Heart right ventricle (tissue), 16 donors: ENCODE measurements at regions of chr4 and their contacts with region 1.

Region 1: DNA sequence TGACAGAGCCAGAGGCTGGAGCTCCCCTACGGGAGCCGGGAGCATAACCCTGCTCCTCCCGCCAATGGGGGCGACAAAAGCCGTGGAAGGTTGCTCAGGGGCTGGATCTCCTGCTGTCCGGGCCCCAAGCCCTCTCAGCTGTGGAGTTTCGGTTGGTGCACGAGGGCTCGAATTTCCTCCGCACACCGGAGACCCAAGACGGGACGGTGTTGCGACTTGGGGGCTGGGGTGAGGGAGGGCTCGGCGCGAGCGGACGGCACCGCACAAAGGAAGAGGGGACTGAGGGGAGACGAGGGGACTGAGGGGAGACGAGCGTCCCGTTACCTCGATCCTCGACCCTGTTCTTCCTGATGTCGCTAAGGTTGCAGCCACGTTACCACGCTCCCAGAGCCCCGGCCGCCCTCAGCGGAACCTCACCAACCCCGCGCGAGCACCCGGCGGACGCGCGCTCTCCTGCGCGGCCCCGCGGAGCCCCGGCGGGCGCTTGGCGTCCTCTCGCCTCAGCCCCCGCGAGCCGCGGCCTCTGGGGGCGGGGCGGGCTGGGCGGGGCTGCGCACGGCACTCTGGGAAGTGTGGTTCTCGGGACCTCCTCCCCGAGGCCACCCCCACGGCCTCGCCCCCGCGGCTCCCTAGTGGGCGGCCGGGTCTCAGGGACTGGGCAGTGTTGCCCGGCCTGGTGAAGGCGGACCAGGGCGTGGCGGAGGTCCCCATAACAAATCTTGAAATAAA is at the start of gene KLHL8:
- DNase-seq: peak; percentile 86 to 90
- ATAC-seq: peak; percentile 98 to 100 (median 98)
- H3K4me3 ChIP-seq: peak within 1 kb of the TSS; percentile 77 to 99 (median 92)
- H3K27ac ChIP-seq: peak within 1 kb of the TSS; percentile 32 to 94 (median 94)
- H3K4me1 ChIP-seq: peaks cover 0 to 18% (median 12%) of the 10 kb centered on the region in 9 donors
- H3K27me3 ChIP-seq: no peaks in the 10 kb centered on the region
- CTCF ChIP-seq: peak in 2 of 9 donors; percentile 11 to 38
- total RNA-seq, gene KLHL8: 10.4 to 15.0 (median 11.9) TPM

Region 2: GRCh38 chr4:86934771-86935565 is 285.3 kb before region 1 on chr4 and contains the start of gene AFF1:
- intact Hi-C with region 1: loop called in 1 of 10 experiments (anchors 2 kb)
- DNase-seq: peak; percentile 94 to 96
- ATAC-seq: peak; percentile 93 to 97 (median 94)
- H3K4me3 ChIP-seq: peak within 1 kb of the TSS; percentile 52 to 99 (median 94)
- H3K27ac ChIP-seq: peak within 1 kb of the TSS; percentile 94 to 100 (median 98)
- H3K4me1 ChIP-seq: peaks cover 0 to 52% (median 35%) of the 10 kb centered on the region in 9 donors
- H3K27me3 ChIP-seq: no peaks in the 10 kb centered on the region
- CTCF ChIP-seq: peak; percentile 22 to 75 (median 61)
- total RNA-seq, gene AFF1: 59.5 to 90.2 (median 77.3) TPM

Region 3: GRCh38 chr4:87118826-87119225 is 101.4 kb before region 1 on chr4:
- intact Hi-C with region 1: no loop called
- DNase-seq: no peak
- ATAC-seq: peak in 1 of 8 donors; percentile 8
- H3K4me3 ChIP-seq: peak overlapping the region in 1 of 10 donors; percentile 33
- H3K27ac ChIP-seq: peak overlapping the region in 6 of 10 donors; percentile 73 to 90 (median 84)
- H3K4me1 ChIP-seq: peaks cover 0 to 69% (median 45%) of the 10 kb centered on the region in 9 donors
- H3K27me3 ChIP-seq: no peaks in the 10 kb centered on the region
- CTCF ChIP-seq: no peak

Region 4: DNA sequence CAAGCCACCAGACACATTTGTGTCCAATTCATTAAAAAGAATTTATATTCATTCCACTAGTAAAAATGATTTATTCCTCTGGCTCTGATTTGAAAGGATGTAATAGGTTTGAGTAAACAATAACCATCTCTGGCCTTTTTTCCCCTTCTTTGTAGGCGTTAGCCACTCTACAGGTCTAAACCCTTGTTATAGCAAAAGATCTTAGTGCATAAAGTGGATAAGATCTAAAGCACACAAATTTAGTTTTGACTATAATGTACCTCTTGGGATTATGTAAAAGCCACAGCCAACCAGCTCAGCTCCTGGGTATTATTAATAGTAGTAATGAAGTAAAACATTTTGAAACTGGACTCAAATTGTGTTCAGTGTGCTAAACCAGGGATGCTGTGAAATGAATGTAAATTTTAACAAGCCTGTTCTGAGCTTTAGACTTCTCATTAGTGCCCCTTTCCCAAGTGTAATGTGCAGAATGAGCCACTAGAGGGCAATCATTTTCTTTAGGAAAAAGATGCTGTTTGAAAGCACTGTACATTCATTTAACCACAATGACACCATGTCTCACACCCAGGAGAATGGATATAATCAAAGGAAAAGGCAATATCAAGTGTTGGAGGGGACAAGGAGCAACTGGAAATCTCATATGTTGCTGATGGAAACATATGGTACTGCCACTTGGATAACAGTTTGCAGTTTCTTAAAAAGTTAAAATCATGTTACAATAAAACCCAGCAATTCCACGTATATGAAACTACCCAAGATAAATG is 69.6 kb before region 1 on chr4:
- intact Hi-C with region 1: loop called in 1 of 10 experiments (anchors 5 kb)
- DNase-seq: peak in 1 of 2 donors; percentile 67
- ATAC-seq: peak; percentile 62 to 86 (median 72)
- H3K4me3 ChIP-seq: no peak overlapping the region
- H3K27ac ChIP-seq: no peak overlapping the region
- H3K4me1 ChIP-seq: no peaks in the 10 kb centered on the region
- H3K27me3 ChIP-seq: no peaks in the 10 kb centered on the region
- CTCF ChIP-seq: peak; percentile 70 to 96 (median 90)